Activated T-helper 1 cell treated with anti-CD3 and anti-CD28 coated beads, Interleukin-12 subunit alpha, Interleukin-12 subunit beta, Interleukin-2, Interleukin-4 antibody, amounts not matched to agents 30 ng/mL and 10 ng/mL and 1 ng/mL, durations not matched to agents 14 hours and 24 hours and 36 hours (primary cell): ENCODE measurements at regions of chr9 and their contacts with region 1.

Region 1: GRCh38 chr9:129641746-129642513 is at the start of gene ASB6:
- DNase-seq: peak; percentile 94
- H3K4me3 Mint-ChIP-seq: peak within 1 kb of the TSS; percentile 87
- H3K27ac Mint-ChIP-seq: peak within 1 kb of the TSS; percentile 90
- H3K4me1 Mint-ChIP-seq: peaks cover 10% of the 10 kb centered on the region
- H3K27me3 Mint-ChIP-seq: peaks cover 2% of the 10 kb centered on the region
- total RNA-seq, gene ASB6: 24.0 TPM in 2 replicates

Region 2: GRCh38 chr9:129320575-129321263 is 321.2 kb before region 1 on chr9:
- intact Hi-C with region 1: no loop called
- DNase-seq: peak; percentile 42
- H3K4me3 Mint-ChIP-seq: peak overlapping the region; percentile 77
- H3K27ac Mint-ChIP-seq: peak overlapping the region; percentile 81
- H3K4me1 Mint-ChIP-seq: peaks cover 19% of the 10 kb centered on the region
- H3K27me3 Mint-ChIP-seq: peaks cover 6% of the 10 kb centered on the region

Region 3: DNA sequence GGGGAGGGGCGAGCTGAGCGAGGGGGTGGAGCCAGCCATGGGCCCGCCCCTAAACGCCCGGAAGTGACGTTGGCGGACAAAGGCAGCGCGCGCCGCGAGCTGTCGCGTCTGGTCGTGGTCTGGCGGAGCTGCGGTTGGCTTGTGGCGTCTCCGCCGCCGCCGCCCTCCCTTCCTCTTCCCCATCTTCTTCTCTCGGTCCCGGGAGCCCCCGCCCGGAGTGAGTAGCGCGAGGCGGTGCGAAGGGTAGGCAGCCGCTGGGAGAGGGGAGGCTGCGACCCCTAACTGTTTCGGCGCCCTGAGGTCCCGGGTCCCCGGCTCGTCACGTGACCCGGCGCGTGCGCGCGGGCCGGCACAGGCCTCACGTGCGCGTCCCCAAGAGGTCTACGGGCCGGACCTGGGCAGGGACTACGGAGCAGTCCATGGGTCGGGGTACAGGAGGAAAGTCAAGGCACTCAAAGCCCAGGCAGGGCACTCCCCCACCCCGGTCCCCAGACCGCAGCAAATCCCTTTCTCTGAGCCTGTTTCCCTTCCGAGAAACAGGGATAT is 15.8 kb before region 1 on chr9 and contains the start of gene NTMT1:
- intact Hi-C with region 1: loop called (anchors 1 kb)
- DNase-seq: peak; percentile 85
- H3K4me3 Mint-ChIP-seq: peak within 1 kb of the TSS; percentile 86
- H3K27ac Mint-ChIP-seq: peak within 1 kb of the TSS; percentile 95
- H3K4me1 Mint-ChIP-seq: peaks cover 41% of the 10 kb centered on the region
- H3K27me3 Mint-ChIP-seq: peaks cover 7% of the 10 kb centered on the region
- total RNA-seq, gene NTMT1: 67.1 and 67.3 TPM in 2 replicates

Region 4: DNA sequence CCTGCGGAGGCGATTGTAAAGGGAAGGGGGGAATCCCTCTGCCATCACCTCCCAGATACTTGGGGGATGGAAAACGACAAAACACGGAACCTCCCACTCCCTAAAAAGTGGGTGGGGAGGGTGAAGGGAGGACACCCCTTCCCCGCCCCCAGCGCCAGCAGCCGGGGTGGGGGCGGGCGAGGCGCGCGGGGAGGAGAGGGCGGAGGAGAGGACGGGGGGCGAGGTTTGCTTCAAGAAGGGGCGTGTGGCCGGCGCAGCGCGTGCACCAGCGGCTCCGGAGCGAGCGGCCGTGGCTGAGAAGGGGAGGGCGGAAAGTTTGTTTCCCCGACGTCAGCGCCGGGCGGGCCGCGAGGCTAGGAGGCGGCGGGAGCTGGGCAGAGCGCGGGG is 23.5 kb after region 1 on chr9 and contains the start of gene PRRX2:
- intact Hi-C with region 1: loop called (anchors 2 kb)
- DNase-seq: peak; percentile 38
- H3K4me3 Mint-ChIP-seq: peak within 1 kb of the TSS; percentile 77
- H3K27ac Mint-ChIP-seq: peak within 1 kb of the TSS; percentile 61
- H3K4me1 Mint-ChIP-seq: peaks cover 6% of the 10 kb centered on the region
- H3K27me3 Mint-ChIP-seq: peaks cover 31% of the 10 kb centered on the region
- total RNA-seq, gene PRRX2: 6.2 and 7.8 TPM in 2 replicates

Region 5: DNA sequence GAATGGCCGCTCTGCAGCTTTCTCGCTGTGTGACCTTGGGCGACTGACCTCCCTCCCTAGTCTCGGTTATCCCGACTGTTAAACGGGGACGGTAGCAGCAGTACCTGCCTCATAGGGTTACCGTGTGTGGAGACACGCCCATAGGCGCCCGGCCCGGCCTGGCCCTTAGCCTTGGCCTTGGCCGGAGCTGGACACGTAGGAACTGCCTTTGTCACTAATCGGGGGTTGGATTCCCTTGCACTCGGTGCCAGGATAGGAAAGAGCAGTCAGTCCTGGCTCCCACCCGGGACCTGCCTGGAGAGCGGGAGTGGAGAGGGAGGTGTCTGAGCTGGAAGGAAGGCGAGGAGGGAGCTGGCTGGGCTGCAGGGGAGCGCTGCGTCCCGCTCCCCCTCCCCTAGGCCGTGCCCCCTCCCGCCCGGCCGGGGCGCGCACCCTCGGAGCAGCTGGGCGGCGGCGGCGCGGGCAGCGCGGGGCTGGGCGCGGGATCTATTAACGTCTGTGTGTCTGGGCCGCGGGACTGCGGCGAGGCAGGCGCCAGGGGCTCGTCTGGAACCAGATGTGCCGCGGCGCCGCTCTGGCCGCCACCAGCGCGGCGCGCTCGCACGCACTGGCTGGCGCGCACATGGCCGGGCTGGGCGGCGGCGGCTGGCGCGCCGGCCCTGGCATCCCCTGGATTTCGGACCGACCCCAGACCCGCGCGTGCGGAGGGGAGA is 55.2 kb after region 1 on chr9:
- intact Hi-C with region 1: loop called (anchors 5 kb)
- DNase-seq: no peak
- H3K4me3 Mint-ChIP-seq: peak overlapping the region; percentile 71
- H3K27ac Mint-ChIP-seq: peak overlapping the region; percentile 89
- H3K4me1 Mint-ChIP-seq: no peaks in the 10 kb centered on the region
- H3K27me3 Mint-ChIP-seq: peaks cover 25% of the 10 kb centered on the region

Region 6: GRCh38 chr9:129726322-129727160 is 84.6 kb after region 1 on chr9:
- intact Hi-C with region 1: loop called (anchors 1 kb)
- DNase-seq: peak; percentile 54
- H3K4me3 Mint-ChIP-seq: peak overlapping the region; percentile 56
- H3K27ac Mint-ChIP-seq: no peak overlapping the region
- H3K4me1 Mint-ChIP-seq: peaks cover 5% of the 10 kb centered on the region
- H3K27me3 Mint-ChIP-seq: peaks cover 16% of the 10 kb centered on the region

Region 7: DNA sequence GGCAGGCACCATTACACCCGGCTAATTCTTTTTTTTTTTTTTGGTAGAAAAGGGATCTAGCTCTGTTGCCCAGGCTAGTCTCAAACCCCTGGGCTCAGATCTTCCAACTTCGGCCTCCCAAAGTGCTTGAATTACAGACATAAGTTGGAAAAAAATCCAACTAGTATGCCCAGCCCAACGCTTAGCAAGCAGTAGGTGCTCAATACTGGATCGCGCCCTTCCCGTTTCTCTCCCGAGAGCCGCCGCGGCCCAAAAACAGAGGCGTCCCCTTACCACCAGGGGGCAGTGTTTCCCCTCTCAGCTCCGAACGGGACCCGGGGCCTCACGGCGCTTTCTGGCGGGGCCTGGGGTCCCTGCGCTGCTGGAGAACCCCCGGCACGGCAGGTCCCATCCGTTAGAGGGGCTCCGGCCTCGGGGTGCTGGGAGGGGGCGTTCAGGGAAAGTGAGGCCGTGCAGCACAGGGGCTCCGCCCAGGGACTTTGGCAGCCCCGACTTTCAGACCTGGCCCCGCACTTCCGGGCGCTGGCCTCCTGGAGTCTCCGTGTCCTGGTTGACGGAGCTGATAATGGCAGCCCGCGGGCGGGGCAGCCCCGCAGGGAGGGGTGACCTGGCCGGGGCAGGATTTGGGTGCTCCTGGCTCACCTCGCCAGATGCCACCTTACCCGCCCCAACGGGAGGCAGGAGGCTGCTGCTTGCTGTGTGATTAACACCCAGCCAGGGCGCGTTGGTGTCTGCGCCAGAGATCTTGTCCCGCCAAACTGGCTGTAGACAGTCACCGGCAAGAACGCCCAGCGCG is 95.7 kb after region 1 on chr9:
- intact Hi-C with region 1: loop called (anchors 1 kb)
- DNase-seq: peak; percentile 77
- H3K4me3 Mint-ChIP-seq: peak overlapping the region; percentile 64
- H3K27ac Mint-ChIP-seq: peak overlapping the region; percentile 49
- H3K4me1 Mint-ChIP-seq: peaks cover 7% of the 10 kb centered on the region
- H3K27me3 Mint-ChIP-seq: peaks cover 7% of the 10 kb centered on the region

Region 8: DNA sequence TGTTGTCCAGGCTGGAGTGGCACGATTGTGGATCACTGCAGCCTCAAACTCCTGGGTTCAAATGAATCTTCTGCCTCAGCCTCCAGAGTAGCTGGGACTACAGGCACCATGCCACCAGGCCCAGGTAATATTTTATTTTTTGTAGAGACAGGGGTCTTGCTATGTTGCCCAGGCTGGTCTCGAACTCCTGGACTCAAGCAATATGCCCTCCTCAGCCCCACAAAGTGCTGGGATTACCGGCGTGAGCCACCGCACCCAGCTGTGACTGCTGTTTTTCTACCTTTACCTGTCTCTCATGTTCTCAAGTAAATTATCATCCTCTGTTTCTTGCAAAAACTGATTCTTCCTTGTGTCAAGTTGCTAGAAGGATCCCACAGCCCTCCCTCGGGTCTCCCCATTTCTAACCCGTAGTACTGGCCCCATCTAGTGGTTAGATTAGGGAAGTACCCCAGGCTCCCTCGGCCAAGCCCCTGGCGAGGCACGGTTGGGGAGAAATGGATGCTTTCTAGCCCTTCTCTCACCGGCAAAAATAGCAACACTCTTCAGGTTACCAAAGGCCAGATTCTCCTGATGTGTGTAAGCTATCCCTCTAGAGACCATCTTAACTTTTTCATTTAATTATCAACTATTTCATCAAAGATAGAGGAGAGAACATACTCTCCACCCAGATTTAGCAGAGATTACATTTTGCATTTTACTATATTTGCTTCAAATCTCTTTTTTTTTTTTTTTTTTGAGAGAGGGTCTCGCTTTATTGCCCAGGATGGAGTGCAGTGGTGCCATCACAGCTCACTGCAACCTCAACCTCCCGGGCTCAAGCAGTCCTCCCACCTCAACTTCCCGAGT is 141.8 kb after region 1 on chr9:
- intact Hi-C with region 1: loop called (anchors 1 kb)
- DNase-seq: peak; percentile 68
- H3K4me3 Mint-ChIP-seq: no peak overlapping the region
- H3K27ac Mint-ChIP-seq: no peak overlapping the region
- H3K4me1 Mint-ChIP-seq: peaks cover 5% of the 10 kb centered on the region
- H3K27me3 Mint-ChIP-seq: peaks cover 18% of the 10 kb centered on the region

Region 9: GRCh38 chr9:129888293-129889121 is 246.6 kb after region 1 on chr9:
- intact Hi-C with region 1: no loop called
- DNase-seq: peak; percentile 93
- H3K4me3 Mint-ChIP-seq: peak overlapping the region; percentile 92
- H3K27ac Mint-ChIP-seq: peak overlapping the region; percentile 100
- H3K4me1 Mint-ChIP-seq: peaks cover 94% of the 10 kb centered on the region
- H3K27me3 Mint-ChIP-seq: peaks cover 2% of the 10 kb centered on the region